ENCODE measurements at regions of chr10 and their contacts with region 1.

Region 1: DNA sequence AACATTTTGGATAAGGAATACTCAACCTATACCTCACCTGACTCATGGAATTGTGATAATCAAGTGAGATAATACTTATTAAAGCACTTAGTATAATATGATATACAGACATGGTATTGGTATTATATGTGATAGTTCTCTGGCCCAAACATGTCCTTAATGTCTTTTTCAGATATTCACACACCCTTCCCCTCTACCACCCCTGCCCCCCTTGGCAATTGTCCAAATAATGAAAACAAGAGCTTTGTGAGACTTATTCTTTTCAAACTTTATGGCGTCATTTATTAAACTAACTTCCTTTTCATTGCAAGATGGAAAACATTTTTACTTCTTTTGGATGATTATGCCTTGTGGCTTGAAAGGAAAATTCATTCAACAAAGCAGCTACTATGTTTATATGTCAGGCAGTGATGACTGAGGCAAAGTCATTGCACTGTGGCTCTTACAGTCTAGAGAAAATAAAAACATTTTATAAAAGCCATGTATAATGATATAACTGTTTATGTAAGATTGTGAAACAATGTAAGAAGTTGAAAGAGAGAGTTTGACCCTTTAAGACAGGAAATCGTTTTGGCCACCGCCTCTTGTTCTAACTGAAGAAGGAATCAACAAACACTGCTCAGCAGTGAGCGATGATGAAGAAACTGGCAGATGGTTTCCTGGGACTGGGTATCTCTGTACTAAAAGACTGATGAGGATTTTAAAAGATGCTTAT is 27.4 kb downstream of the MINPP1 start:
- DNase-seq: no peak
- ATAC-seq: no peak
- H3K4me3 ChIP-seq: no peak overlapping the region
- H3K27ac ChIP-seq: no peak overlapping the region
- H3K4me1 ChIP-seq: no peaks in the 10 kb centered on the region
- H3K27me3 ChIP-seq: no peaks in the 10 kb centered on the region
- CTCF ChIP-seq: no peak
- EP300 ChIP-seq: no peak
- POLR2A ChIP-seq: no peak
- RAD21 ChIP-seq: no peak

Region 2: DNA sequence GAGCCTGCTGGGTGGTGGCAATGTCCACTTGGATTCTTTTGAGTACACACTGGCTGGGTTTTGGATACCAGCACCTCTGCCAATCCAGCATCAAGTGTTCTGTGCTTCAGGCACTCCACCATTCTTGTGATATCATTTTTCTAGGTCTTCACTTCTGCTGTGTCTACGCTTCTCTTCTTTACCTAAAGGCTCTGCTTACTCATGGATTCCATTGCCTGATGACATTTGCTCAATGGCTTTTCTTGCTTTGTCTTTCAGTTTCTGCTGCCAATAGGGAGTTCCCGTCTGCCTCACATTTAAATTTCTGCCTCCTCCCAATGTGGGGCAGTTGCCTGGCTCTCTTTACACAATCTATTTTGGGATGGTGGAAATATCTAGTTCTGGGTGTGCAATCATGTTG is 114.9 kb after region 1 on chr10:
- CTCF ChIA-PET with region 1: no interaction called
- POLR2A ChIA-PET with region 1: no interaction called
- in situ Hi-C with region 1: no loop called
- intact Hi-C with region 1: loop called (anchors 5 kb)
- DNase-seq: no peak
- ATAC-seq: no peak
- H3K4me3 ChIP-seq: no peak overlapping the region
- H3K27ac ChIP-seq: no peak overlapping the region
- H3K4me1 ChIP-seq: no peaks in the 10 kb centered on the region
- H3K27me3 ChIP-seq: no peaks in the 10 kb centered on the region
- CTCF ChIP-seq: no peak
- EP300 ChIP-seq: no peak
- POLR2A ChIP-seq: no peak
- RAD21 ChIP-seq: no peak

Region 3: GRCh38 chr10:87734987-87735827 is 203.1 kb after region 1 on chr10:
- CTCF ChIA-PET with region 1: interaction called, 3 read pairs
- POLR2A ChIA-PET with region 1: no interaction called
- in situ Hi-C with region 1: no loop called
- intact Hi-C with region 1: loop called (anchors 10 kb)
- DNase-seq: peak; percentile 29 to 43 (median 36)
- ATAC-seq: peak; percentile 88
- H3K4me3 ChIP-seq: no peak overlapping the region
- H3K27ac ChIP-seq: no peak overlapping the region
- H3K4me1 ChIP-seq: no peaks in the 10 kb centered on the region
- H3K27me3 ChIP-seq: no peaks in the 10 kb centered on the region; a peak in 1 of 5 replicates
- CTCF ChIP-seq: peak; percentile 51 to 71 (median 68)
- EP300 ChIP-seq: no peak
- POLR2A ChIP-seq: no peak
- RAD21 ChIP-seq: peak; percentile 74 to 86